MCF 10A (cell line): ENCODE measurements at regions of chr1 and their contacts with region 1.

Region 1: DNA sequence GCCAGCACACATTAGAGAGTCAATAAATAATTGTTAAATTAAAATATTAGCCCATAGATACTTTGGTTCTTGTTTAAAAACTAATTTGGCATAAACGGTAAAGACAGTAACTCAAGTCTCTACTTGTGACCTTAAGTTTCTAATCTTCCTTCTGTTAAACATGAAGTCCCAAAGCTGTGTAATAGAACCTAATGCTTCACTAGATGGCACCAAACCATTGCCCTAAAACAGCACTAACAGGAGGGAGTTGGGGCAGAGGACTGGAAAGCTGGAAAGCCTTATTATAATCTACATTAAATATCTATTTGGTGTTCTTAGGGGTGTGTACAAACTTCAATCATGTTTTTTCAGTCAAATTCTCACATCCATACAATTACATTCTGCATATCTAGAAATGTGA is 176.7 kb downstream of the OLFM3 start:
- DNase-seq: peak; percentile 66
- H3K4me3 Mint-ChIP-seq: no peak overlapping the region
- H3K27ac Mint-ChIP-seq: no peak overlapping the region
- H3K4me1 Mint-ChIP-seq: no peaks in the 10 kb centered on the region
- H3K27me3 Mint-ChIP-seq: peaks cover 95% of the 10 kb centered on the region
- CTCF ChIP-seq: peak; percentile 28

Region 2: GRCh38 chr1:101971304-101971703 is 151.2 kb after region 1 on chr1:
- CTCF ChIA-PET with region 1: interaction called, 6 read pairs
- POLR2A ChIA-PET with region 1: no interaction called
- intact Hi-C with region 1: loop called (anchors 10 kb)
- DNase-seq: peak; percentile 16
- H3K4me3 Mint-ChIP-seq: no peak overlapping the region
- H3K27ac Mint-ChIP-seq: no peak overlapping the region
- H3K4me1 Mint-ChIP-seq: no peaks in the 10 kb centered on the region
- H3K27me3 Mint-ChIP-seq: peaks cover 87% of the 10 kb centered on the region
- CTCF ChIP-seq: peak; percentile 20

Region 3: GRCh38 chr1:102191723-102192122 is 371.7 kb after region 1 on chr1:
- CTCF ChIA-PET with region 1: no interaction called
- POLR2A ChIA-PET with region 1: no interaction called
- intact Hi-C with region 1: loop called (anchors 1 kb)
- DNase-seq: peak; percentile 74
- H3K4me3 Mint-ChIP-seq: no peak overlapping the region
- H3K27ac Mint-ChIP-seq: no peak overlapping the region
- H3K4me1 Mint-ChIP-seq: no peaks in the 10 kb centered on the region
- H3K27me3 Mint-ChIP-seq: peaks cover 64% of the 10 kb centered on the region
- CTCF ChIP-seq: peak; percentile 35

Region 4: DNA sequence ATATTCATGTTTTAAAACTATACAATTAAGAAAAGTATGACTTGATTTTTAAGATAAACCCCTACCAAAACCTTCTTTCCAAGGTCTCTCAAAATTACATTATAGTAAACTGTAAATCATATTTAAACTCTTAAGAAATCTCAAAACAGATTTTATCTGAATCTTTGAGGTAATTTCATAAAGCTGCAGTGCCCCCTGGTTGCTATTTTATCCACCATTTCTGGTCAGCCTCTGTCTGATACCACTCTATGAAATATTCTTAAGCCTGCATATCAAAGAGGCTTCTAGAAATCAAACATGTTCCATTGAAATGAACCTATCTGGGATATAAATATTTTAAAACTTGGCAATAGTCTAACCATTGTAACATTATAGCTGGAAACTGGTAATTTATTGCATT is 970.9 kb after region 1 on chr1:
- CTCF ChIA-PET with region 1: no interaction called
- POLR2A ChIA-PET with region 1: no interaction called
- intact Hi-C with region 1: loop called (anchors 10 kb)
- DNase-seq: peak; percentile 30
- H3K4me3 Mint-ChIP-seq: no peak overlapping the region
- H3K27ac Mint-ChIP-seq: no peak overlapping the region
- H3K4me1 Mint-ChIP-seq: no peaks in the 10 kb centered on the region
- H3K27me3 Mint-ChIP-seq: no peaks in the 10 kb centered on the region
- CTCF ChIP-seq: peak; percentile 6